ENCODE measurements at regions of chr7 and their contacts with region 1.

Region 1: GRCh38 chr7:1579481-1580421 is 9.9 kb upstream of the PSMG3 start:
- DNase-seq: peak; percentile 86
- ATAC-seq: peak; percentile 94

Region 2: DNA sequence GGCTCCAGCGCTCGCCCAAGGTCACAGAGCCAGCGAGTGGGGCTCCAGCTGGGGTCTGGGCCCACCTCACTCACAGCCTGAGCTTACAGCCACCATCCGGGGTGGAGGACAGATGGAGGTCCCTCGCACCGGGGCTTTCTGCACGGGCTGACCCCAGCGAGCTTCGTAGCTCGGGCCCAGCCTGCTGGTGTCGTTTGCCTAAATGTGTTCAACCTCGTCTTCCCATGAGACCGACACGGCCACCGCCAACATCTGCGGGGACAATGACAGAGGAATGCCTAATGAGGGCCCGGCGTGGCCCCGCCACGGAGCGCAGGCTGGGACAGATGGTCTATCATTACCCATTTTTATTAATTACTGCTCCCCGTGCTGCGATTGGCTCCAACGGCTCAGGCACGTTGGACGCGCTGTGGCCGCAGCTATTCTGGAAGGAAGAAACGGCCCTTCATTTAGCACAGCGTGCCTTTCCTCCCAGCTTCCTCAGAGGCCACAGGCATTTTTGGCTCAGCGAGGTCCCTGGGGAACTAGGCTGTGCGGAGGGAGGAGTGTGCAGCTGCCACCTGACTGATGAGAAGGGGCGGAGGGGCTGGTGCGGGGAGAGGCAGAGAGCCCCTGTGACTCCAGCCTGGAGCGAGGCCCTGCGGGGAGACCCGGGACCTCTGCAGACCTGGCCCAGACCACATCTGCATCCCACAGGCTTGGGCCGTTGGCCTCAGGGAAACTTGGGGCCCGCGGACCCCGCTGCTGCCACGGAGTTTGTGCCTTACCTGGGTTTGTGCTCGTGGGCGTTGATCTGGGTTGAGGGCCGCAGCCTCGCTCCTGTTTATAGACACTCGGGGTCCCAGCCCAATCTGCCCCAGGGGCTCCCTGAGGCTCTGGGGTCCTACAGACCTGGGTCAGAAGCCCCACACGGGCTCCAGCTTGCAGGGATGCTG is 67.5 kb after region 1 on chr7:
- intact Hi-C with region 1: loop called (anchors 5 kb)
- DNase-seq: peak; percentile 65
- ATAC-seq: peak; percentile 23

Region 3: DNA sequence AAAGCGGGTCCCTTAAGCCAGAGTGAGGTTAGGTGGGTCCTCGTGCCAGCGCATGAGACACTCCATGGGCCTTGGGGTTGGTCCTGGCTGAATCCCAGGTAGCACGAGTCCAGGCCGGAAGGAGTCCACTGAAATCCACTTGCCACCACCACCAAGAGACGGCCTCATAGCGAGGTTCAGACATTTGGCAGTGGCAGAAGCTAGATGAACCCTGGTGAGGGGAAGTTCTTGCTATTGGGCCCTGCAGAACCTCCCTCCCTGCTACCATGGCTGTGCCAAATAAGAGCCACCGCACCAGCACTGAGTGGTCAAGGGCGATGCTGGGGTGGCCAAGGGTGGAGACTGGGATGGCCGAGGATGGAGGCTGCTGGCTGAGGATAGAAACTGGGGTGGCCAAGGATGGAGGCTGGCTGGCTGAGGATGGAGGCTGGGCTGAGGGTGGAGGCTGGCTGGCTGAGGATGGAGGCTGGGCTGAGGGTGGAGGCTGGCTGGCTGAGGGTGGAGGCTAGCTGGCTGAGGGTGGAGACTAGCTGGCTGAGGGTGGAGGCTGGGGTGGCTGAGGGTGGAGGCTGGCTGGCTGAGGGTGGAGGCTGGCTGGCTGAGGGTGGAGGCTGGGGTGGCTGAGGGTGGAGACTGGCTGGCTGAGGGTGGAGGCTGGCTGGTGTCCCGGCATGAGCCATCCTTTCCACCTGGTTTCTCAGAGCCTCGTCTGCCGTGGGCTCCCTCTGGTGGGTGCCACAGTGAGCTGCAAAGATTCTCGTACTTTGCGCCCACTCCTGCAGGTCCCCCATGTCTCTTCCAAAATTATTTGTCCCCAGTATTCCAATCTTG is 178.5 kb after region 1 on chr7:
- intact Hi-C with region 1: loop called (anchors 5 kb)
- DNase-seq: peak; percentile 72
- ATAC-seq: peak; percentile 66

Region 4: GRCh38 chr7:2209146-2209960 is 629.6 kb after region 1 on chr7:
- intact Hi-C with region 1: loop called (anchors 1 kb)
- DNase-seq: peak; percentile 76
- ATAC-seq: peak; percentile 54

Region 5: GRCh38 chr7:2468227-2468626 is 888.5 kb after region 1 on chr7:
- intact Hi-C with region 1: loop called (anchors 2 kb)
- DNase-seq: no peak
- ATAC-seq: no peak